Astrocyte of the cerebellum (primary cell): ENCODE measurements at regions of chr3 and their contacts with region 1.

Region 1: GRCh38 chr3:45037734-45038455 is 11.8 kb downstream of the CLEC3B start:
- DNase-seq: peak; percentile 86
- H3K4me3 ChIP-seq: no peak overlapping the region
- CTCF ChIP-seq: peak; percentile 86

Region 2: DNA sequence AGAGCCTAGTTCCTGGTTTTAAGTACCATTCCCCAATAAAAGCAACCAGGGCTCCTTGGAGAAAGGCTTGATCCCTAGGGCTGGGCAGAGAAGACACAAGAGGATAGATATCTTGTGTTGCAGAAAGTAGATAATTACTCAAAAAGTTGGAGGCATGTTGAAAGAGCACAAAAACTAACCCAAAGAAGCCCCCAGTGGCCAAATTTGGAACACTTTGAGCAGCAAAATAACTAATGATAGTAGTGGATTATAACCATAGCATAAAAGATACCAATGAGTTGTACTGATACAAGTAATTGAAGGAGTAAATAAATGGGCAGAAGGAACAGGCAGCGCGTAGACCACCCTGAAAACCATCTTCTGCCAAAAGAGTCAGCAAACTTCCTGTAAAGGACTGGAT is 49.8 kb before region 1 on chr3:
- in situ Hi-C with region 1: no loop called
- DNase-seq: no peak
- H3K4me3 ChIP-seq: no peak overlapping the region
- CTCF ChIP-seq: peak; percentile 60

Region 3: DNA sequence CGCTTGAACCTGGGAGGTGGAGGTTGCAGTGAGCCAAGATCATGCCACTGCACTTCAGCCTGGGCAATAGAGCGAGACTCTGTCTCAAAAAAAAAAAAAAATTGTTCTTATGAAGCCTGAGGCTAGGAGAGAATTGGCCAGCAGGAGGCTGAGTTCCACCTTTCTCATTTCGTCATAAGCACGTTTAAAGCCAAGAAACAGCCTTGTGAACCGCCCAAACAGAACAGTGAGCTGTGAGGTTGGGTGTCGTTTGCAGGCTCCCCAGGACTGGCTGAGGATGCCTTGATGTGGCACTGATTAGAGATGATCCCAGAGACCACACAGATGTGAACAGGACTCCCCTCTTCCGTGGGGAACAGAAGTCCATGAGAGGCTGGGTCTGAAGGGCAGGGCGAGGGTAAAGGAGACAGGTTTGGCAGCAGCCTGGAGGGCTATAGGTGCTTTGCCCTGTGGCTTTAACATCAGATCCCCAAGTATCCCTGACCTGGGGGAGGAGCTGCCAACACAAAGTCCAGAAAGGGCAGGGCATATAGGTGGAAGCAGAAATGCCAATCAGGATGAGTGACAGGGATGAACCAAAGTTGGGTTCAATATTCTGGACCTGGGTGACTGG is 41.1 kb after region 1 on chr3:
- in situ Hi-C with region 1: no loop called
- DNase-seq: no peak
- H3K4me3 ChIP-seq: no peak overlapping the region
- CTCF ChIP-seq: peak; percentile 28

Region 4: DNA sequence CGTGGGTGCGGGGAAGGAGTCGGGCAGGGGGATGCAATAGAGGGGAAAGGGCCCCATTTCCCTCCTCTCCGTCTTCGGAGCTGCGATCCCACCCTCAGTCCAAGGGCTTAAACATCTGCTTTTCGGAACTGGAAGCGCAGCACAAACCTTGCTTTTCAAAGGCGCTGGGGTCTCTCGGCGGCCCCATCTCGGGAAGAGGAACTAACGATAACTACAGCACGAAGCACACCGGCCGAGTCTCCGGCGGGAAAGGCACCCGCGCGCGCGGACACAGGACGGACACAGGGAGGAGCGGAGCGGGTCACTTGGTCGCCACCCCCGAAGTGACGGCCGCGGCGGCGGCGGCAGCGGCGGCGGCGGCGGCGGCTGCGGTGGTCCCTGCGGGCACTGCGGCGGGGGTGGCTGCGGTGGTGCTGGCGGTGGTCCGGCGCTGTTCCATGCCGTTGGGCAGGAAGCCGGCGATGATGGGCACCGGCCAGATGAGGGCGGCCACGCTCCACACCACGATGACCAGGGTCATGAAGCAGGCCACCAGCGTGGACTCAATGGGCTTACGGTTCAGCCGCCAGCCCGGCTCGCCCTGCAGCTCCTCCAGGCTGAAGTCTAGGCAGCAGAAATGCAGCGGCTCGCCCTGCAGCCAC is 187.0 kb after region 1 on chr3:
- in situ Hi-C with region 1: loop called (anchors 25 kb)
- DNase-seq: no peak
- H3K4me3 ChIP-seq: peak overlapping the region; percentile 46
- CTCF ChIP-seq: peak; percentile 35